Activated B cell treated with CpG ODN at 0.5 μM for 24 hours (primary cell): ENCODE measurements at regions of chr17 and their contacts with region 1.

Region 1: GRCh38 chr17:74659898-74660297 is 36.4 kb upstream of the CD300E start:
- DNase-seq: no peak
- ATAC-seq: no peak
- H3K4me3 Mint-ChIP-seq: no peak overlapping the region
- H3K27ac Mint-ChIP-seq: no peak overlapping the region
- H3K4me1 Mint-ChIP-seq: peaks cover 4% of the 10 kb centered on the region
- H3K27me3 Mint-ChIP-seq: peaks cover 44% of the 10 kb centered on the region
- CTCF ChIP-seq: no peak

Region 2: GRCh38 chr17:74566132-74566753 is 93.7 kb before region 1 on chr17:
- CTCF ChIA-PET with region 1: interaction called, 19 read pairs
- POLR2A ChIA-PET with region 1: no interaction called
- intact Hi-C with region 1: no loop called
- DNase-seq: no peak
- ATAC-seq: peak; percentile 54
- H3K4me3 Mint-ChIP-seq: no peak overlapping the region
- H3K27ac Mint-ChIP-seq: no peak overlapping the region
- H3K4me1 Mint-ChIP-seq: peaks cover 9% of the 10 kb centered on the region
- H3K27me3 Mint-ChIP-seq: peaks cover 40% of the 10 kb centered on the region
- CTCF ChIP-seq: no peak

Region 3: DNA sequence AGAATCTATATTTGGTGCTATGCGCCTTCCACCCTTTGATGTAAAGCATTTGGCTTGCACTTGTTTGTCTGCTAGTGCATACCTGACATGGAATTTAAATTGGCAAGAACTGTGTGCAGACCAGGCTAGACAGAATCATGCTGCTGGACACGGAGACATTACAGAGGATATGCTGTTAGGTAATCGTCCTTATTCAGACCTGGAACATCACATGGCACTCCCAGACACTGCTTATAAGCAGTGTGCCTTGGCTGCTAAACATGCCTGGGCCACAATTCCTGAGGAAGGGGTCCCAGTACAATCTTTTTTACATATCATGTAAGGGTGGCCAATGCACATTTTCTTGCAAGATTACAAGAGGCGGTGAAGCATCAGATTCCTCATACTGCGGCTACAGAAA is 74.2 kb before region 1 on chr17:
- CTCF ChIA-PET with region 1: no interaction called
- POLR2A ChIA-PET with region 1: no interaction called
- intact Hi-C with region 1: no loop called
- DNase-seq: no peak
- ATAC-seq: no peak
- H3K4me3 Mint-ChIP-seq: no peak overlapping the region
- H3K27ac Mint-ChIP-seq: no peak overlapping the region
- H3K4me1 Mint-ChIP-seq: no peaks in the 10 kb centered on the region
- H3K27me3 Mint-ChIP-seq: peaks cover 12% of the 10 kb centered on the region
- CTCF ChIP-seq: no peak

Region 4: DNA sequence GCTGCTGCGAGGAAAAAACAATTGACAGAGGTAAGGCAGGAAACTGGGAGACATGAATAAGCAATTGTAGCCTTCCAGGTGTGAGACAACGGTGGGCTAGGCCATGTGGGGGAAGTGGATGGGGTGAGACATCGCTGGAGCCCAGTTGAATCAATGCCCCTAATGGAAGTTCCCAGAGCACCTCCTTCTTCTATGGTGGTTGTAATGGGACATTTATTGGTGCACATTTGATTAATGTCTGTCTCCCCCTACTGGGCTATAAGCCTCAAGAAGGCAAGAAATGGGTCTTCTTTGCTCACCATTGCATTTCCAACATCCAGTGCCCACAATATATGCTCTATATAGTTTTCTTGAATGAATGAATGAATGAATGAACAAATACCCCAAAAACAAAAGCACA is 13.7 kb before region 1 on chr17:
- CTCF ChIA-PET with region 1: interaction called, 16 read pairs
- POLR2A ChIA-PET with region 1: interaction called, 7 read pairs
- intact Hi-C with region 1: loop called (anchors 1 kb)
- DNase-seq: no peak
- ATAC-seq: peak; percentile 45
- H3K4me3 Mint-ChIP-seq: no peak overlapping the region
- H3K27ac Mint-ChIP-seq: peak overlapping the region; percentile 31
- H3K4me1 Mint-ChIP-seq: peaks cover 46% of the 10 kb centered on the region
- H3K27me3 Mint-ChIP-seq: peaks cover 34% of the 10 kb centered on the region
- CTCF ChIP-seq: no peak

Region 5: GRCh38 chr17:74698069-74698468 is 38.2 kb after region 1 on chr17:
- CTCF ChIA-PET with region 1: no interaction called
- POLR2A ChIA-PET with region 1: no interaction called
- intact Hi-C with region 1: no loop called
- DNase-seq: no peak
- ATAC-seq: no peak
- H3K4me3 Mint-ChIP-seq: no peak overlapping the region
- H3K27ac Mint-ChIP-seq: no peak overlapping the region
- H3K4me1 Mint-ChIP-seq: no peaks in the 10 kb centered on the region
- H3K27me3 Mint-ChIP-seq: peaks cover 9% of the 10 kb centered on the region
- CTCF ChIP-seq: no peak

Region 6: GRCh38 chr17:74736513-74737298 is 76.8 kb after region 1 on chr17 and contains the start of gene RAB37:
- CTCF ChIA-PET with region 1: interaction called, 187 read pairs
- POLR2A ChIA-PET with region 1: interaction called, 34 read pairs
- intact Hi-C with region 1: loop called (anchors 1 kb)
- DNase-seq: peak; percentile 74
- ATAC-seq: peak; percentile 73
- H3K4me3 Mint-ChIP-seq: peak within 1 kb of the TSS; percentile 85
- H3K27ac Mint-ChIP-seq: peak within 1 kb of the TSS; percentile 88
- H3K4me1 Mint-ChIP-seq: peaks cover 49% of the 10 kb centered on the region
- H3K27me3 Mint-ChIP-seq: no peaks in the 10 kb centered on the region
- CTCF ChIP-seq: no peak
- total RNA-seq, gene RAB37: 11.0 and 11.1 TPM in 2 replicates

Region 7: DNA sequence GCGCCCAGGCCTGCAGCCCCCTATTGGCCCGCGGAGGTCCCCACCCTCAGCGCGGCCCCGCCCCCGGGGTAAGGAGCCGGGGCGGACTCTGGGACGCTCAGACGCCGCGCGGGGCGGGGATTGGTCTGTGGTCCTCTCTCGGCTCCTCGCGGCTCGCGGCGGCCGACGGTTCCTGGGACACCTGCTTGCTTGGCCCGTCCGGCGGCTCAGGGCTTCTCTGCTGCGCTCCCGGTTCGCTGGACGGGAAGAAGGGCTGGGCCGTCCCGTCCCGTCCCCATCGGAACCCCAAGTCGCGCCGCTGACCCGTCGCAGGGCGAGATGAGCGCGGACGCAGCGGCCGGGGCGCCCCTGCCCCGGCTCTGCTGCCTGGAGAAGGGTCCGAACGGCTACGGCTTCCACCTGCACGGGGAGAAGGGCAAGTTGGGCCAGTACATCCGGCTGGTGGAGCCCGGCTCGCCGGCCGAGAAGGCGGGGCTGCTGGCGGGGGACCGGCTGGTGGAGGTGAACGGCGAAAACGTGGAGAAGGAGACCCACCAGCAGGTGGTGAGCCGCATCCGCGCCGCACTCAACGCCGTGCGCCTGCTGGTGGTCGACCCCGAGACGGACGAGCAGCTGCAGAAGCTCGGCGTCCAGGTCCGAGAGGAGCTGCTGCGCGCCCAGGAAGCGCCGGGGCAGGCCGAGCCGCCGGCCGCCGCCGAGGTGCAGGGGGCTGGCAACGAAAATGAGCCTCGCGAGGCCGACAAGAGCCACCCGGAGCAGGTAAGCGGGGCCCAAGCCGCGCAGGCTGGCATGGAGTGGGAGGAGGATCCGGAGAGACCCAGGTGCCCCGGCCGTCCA is 88.8 kb after region 1 on chr17 and contains the start of gene NHERF1:
- CTCF ChIA-PET with region 1: interaction called, 29 read pairs
- POLR2A ChIA-PET with region 1: interaction called, 6 read pairs
- intact Hi-C with region 1: no loop called
- DNase-seq: peak; percentile 97
- ATAC-seq: peak; percentile 96
- H3K4me3 Mint-ChIP-seq: peak within 1 kb of the TSS; percentile 89
- H3K27ac Mint-ChIP-seq: peak within 1 kb of the TSS; percentile 72
- H3K4me1 Mint-ChIP-seq: peaks cover 64% of the 10 kb centered on the region
- H3K27me3 Mint-ChIP-seq: no peaks in the 10 kb centered on the region
- CTCF ChIP-seq: no peak
- total RNA-seq, gene NHERF1: 33.3 and 34.5 TPM in 2 replicates

Region 8: GRCh38 chr17:74770498-74771318 is 110.8 kb after region 1 on chr17:
- CTCF ChIA-PET with region 1: interaction called, 70 read pairs
- POLR2A ChIA-PET with region 1: interaction called, 7 read pairs
- intact Hi-C with region 1: loop called (anchors 1 kb)
- DNase-seq: peak; percentile 57
- ATAC-seq: peak; percentile 97
- H3K4me3 Mint-ChIP-seq: no peak overlapping the region
- H3K27ac Mint-ChIP-seq: peak overlapping the region; percentile 46
- H3K4me1 Mint-ChIP-seq: peaks cover 18% of the 10 kb centered on the region
- H3K27me3 Mint-ChIP-seq: no peaks in the 10 kb centered on the region
- CTCF ChIP-seq: no peak

Region 9: DNA sequence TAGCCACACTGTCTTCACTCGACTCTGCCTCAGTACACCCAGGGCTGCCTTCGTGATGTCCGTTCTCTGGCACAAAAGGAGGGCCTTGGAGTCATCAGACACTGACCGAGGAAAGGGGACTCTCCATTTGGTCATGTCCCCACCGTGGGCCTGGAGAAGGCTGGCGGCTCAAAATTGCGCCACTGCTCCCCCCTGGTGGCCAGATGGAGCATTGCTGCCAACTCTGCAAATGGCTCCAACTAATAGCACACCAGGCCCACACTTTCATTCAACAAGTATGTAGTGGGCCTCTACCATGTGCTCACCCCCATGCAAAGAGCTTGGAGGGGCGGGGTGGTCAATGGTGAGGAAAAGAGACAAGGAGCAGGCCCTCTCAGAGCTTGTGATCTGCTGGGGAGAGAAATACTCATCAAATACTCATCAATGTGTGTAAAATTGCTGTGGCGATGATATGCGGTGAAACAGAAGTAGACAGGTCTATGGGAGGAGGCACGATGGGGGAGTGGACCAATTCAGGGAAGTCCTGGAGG is 205.0 kb after region 1 on chr17:
- CTCF ChIA-PET with region 1: interaction called, 33 read pairs
- POLR2A ChIA-PET with region 1: no interaction called
- intact Hi-C with region 1: loop called (anchors 1 kb)
- DNase-seq: peak; percentile 69
- ATAC-seq: peak; percentile 76
- H3K4me3 Mint-ChIP-seq: no peak overlapping the region
- H3K27ac Mint-ChIP-seq: no peak overlapping the region
- H3K4me1 Mint-ChIP-seq: peaks cover 25% of the 10 kb centered on the region
- H3K27me3 Mint-ChIP-seq: peaks cover 11% of the 10 kb centered on the region
- CTCF ChIP-seq: no peak

Region 10: DNA sequence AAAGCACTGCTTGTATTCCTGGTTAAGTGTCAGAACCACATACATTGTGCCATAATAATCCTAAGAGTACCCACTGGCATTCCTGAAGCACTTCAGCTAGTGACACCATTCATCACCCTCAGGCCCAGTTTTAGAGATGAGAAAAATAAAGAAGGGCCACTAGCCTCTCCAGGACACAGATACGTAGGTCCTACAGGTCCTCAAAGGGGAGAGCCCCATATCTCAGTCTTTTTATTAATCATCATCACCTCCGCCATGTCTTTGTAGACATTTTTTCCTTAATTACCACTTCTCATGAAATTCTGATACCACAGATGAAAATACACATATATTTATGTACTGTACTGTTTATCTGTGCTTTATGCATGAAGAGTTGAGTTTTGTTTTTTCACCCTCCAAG is 702.1 kb after region 1 on chr17:
- CTCF ChIA-PET with region 1: no interaction called
- POLR2A ChIA-PET with region 1: no interaction called
- intact Hi-C with region 1: no loop called
- DNase-seq: no peak
- ATAC-seq: no peak
- H3K4me3 Mint-ChIP-seq: no peak overlapping the region
- H3K27ac Mint-ChIP-seq: peak overlapping the region; percentile 38
- H3K4me1 Mint-ChIP-seq: peaks cover 91% of the 10 kb centered on the region
- H3K27me3 Mint-ChIP-seq: no peaks in the 10 kb centered on the region
- CTCF ChIP-seq: no peak